MCF 10A (cell line): ENCODE measurements at regions of chr20 and their contacts with region 1.

Region 1: DNA sequence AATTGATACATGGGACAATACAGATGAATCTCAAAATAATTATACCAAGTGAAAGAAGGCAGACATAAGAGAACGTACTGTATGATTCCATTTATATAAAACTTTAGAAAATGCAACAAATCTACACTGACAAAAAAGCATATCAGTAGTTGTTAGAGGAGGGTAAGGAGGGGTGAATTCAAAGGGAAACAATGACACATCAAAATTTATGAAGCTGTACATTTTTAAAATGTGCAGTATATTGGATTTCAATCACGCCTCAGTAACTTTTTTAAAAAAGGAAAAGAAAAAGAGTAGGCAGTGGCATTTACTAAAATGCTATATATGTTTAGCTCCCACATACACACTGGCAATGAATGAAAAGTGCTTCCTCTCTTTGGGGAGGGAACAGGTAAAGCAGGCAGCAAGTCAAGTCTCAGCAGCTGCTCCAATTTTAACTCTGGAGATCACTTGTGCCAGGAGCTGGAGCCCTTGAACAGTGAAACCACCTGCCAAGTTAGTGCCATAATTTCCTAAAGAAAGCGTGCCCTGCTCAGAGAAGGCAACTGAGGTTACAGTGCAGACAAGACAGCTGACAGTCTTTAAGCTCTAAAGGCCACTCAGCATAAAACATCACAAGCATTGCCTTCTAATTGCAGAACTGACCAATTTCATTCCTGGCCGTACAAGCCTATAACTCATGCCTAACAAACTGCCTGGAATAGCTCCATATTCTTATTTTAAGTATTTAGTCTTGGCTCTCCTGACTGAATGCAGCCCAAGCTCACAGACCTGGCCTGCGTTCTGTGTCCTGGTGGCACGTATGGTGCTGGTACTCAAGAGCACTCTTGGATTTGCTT is 10.9 kb downstream of the FKBP1A start:
- DNase-seq: no peak
- H3K4me3 Mint-ChIP-seq: no peak overlapping the region
- H3K27ac Mint-ChIP-seq: no peak overlapping the region
- H3K4me1 Mint-ChIP-seq: peaks cover 59% of the 10 kb centered on the region
- H3K27me3 Mint-ChIP-seq: no peaks in the 10 kb centered on the region
- CTCF ChIP-seq: no peak

Region 2: GRCh38 chr20:1392823-1393506 is 11.0 kb after region 1 on chr20 and contains the start of gene FKBP1A:
- CTCF ChIA-PET with region 1: interaction called, 4 read pairs
- POLR2A ChIA-PET with region 1: interaction called, 12 read pairs
- intact Hi-C with region 1: no loop called
- DNase-seq: peak; percentile 90
- H3K4me3 Mint-ChIP-seq: peak within 1 kb of the TSS; percentile 83
- H3K27ac Mint-ChIP-seq: peak within 1 kb of the TSS; percentile 91
- H3K4me1 Mint-ChIP-seq: peaks cover 31% of the 10 kb centered on the region
- H3K27me3 Mint-ChIP-seq: no peaks in the 10 kb centered on the region
- CTCF ChIP-seq: no peak
- total RNA-seq, gene FKBP1A: 209 and 217 TPM in 2 replicates